GM12878 (cell line): ENCODE measurements at regions of chr9 and their contacts with region 1.

Region 1: GRCh38 chr9:97598461-97599288 is 34.5 kb downstream of the TSTD2 start:
- DNase-seq: peak; percentile 61
- ATAC-seq: peak; percentile 98
- H3K4me3 ChIP-seq: 0 out of 2 replicates have a peak overlapping the region, but pooled peaks have one; percentile 15
- H3K27ac ChIP-seq: no peak overlapping the region
- H3K4me1 ChIP-seq: peaks cover 7% of the 10 kb centered on the region; the same call in 1 of the 2 replicates
- H3K27me3 ChIP-seq: no peaks in the 10 kb centered on the region
- CTCF ChIP-seq: peak; percentile 77 to 94 (median 88)
- EP300 ChIP-seq: no peak
- POLR2A ChIP-seq: no peak
- RAD21 ChIP-seq: peak; percentile 86

Region 2: DNA sequence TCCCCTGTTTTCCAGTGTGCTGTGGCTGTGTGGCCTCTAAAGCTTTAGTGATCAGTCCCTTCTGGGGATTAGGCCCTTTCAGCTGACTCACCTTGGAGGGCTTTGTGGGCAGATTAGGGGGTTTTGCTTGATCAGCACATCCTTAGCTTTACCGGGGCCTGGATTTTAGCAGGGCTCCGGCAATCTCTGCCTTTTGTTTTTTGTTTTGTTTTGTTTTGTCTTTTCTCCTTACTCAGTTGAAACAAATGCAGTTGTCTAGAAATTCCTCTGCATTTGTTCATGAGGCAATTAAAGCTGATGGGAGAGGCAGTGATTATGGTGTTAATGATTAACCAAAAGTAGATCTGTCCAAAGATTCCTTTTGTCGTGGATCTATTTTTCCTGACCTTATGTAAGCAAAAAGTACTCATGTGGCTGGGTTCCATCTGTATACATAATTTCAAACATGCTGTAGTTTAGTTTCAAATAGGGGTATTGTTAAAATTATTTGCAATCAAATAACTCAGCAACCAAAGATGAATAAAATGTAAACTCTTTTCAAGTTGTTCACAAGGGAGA is 192.0 kb before region 1 on chr9:
- CTCF ChIA-PET with region 1: interaction called, 19 read pairs
- POLR2A ChIA-PET with region 1: no interaction called
- RAD21 ChIA-PET with region 1: no interaction called
- SMC1A ChIA-PET with region 1: interaction called, 9 read pairs
- in situ Hi-C with region 1: no loop called
- intact Hi-C with region 1: no loop called
- DNase-seq: no peak
- ATAC-seq: peak; percentile 60
- H3K4me3 ChIP-seq: no peak overlapping the region
- H3K27ac ChIP-seq: no peak overlapping the region
- H3K4me1 ChIP-seq: no peaks in the 10 kb centered on the region
- H3K27me3 ChIP-seq: no peaks in the 10 kb centered on the region; a peak in 1 of 4 replicates
- CTCF ChIP-seq: no peak
- EP300 ChIP-seq: no peak
- POLR2A ChIP-seq: no peak
- RAD21 ChIP-seq: no peak

Region 3: GRCh38 chr9:97468658-97469448 is 129.8 kb before region 1 on chr9:
- CTCF ChIA-PET with region 1: interaction called, 573 read pairs
- POLR2A ChIA-PET with region 1: interaction called, 11 read pairs
- RAD21 ChIA-PET with region 1: interaction called, 306 read pairs
- SMC1A ChIA-PET with region 1: interaction called, 377 read pairs
- in situ Hi-C with region 1: loop called (anchors 5 kb)
- intact Hi-C with region 1: loop called (anchors 1 kb)
- DNase-seq: peak; percentile 59
- ATAC-seq: peak; percentile 99
- H3K4me3 ChIP-seq: no peak overlapping the region; the same call in 1 of the 2 replicates
- H3K27ac ChIP-seq: peak overlapping the region; percentile 74
- H3K4me1 ChIP-seq: peaks cover 18% of the 10 kb centered on the region
- H3K27me3 ChIP-seq: no peaks in the 10 kb centered on the region
- CTCF ChIP-seq: peak; percentile 83 to 94 (median 92)
- EP300 ChIP-seq: no peak
- POLR2A ChIP-seq: no peak
- RAD21 ChIP-seq: peak; percentile 97

Region 4: DNA sequence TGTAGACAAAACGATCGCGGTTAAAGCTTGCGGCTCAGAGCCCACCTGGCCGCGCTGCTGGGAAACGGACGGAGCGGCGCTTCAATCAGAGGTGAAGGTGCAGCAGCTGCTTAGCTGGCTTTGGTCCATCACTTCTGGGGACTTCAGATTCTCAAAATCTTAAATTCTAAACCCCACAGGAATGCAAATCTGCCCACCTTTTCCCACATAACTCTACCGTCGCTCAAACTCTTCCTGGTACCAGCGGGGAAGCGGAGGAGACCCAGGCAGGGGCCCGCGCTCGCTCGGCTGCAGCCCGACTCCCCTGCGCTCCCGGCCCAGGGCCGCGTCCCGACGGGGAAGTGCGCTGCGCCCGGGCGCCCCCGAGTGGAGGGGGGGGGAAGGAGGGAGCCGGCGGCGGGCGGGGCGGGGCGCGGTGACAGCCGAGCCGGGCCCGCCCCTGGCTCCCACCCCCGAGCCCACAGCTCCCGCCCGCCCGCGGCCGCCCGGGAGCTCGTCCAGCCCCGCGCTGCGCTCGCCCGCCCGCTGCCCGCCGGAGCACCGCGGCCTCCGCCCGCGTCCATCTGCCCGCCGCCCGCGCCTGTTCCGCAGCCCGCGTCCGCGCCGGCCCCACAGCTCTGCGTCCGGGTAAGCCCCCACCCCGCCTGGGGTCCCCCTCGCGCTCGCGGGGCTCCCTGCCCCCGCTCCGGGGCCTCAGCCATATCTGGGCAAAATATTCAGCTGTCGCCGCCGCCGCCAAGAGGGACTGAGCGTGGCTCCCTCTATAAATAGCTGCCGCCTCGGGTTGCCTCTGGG is 97.3 kb before region 1 on chr9 and contains the start of gene TMOD1:
- CTCF ChIA-PET with region 1: interaction called, 135 read pairs
- POLR2A ChIA-PET with region 1: interaction called, 13 read pairs
- RAD21 ChIA-PET with region 1: interaction called, 106 read pairs
- SMC1A ChIA-PET with region 1: interaction called, 89 read pairs
- in situ Hi-C with region 1: no loop called
- intact Hi-C with region 1: loop called (anchors 10 kb)
- DNase-seq: no peak
- ATAC-seq: peak; percentile 73
- H3K4me3 ChIP-seq: peak within 1 kb of the TSS; percentile 86
- H3K27ac ChIP-seq: peak within 1 kb of the TSS; percentile 70
- H3K4me1 ChIP-seq: peaks cover 28% of the 10 kb centered on the region
- H3K27me3 ChIP-seq: no peaks in the 10 kb centered on the region
- CTCF ChIP-seq: peak; percentile 17 to 37 (median 27); a peak in 3 of 6 replicates
- EP300 ChIP-seq: no peak
- POLR2A ChIP-seq: peak; percentile 45; the same call in 1 of the 2 replicates
- RAD21 ChIP-seq: peak; percentile 39; the same call in 1 of the 2 replicates
- polyA plus RNA-seq, gene TMOD1: 11.1 to 16.9 TPM

Region 5: GRCh38 chr9:97559111-97559514 is 39.6 kb before region 1 on chr9:
- CTCF ChIA-PET with region 1: interaction called, 38 read pairs
- POLR2A ChIA-PET with region 1: no interaction called
- RAD21 ChIA-PET with region 1: interaction called, 19 read pairs
- SMC1A ChIA-PET with region 1: interaction called, 15 read pairs
- in situ Hi-C with region 1: no loop called
- intact Hi-C with region 1: no loop called
- DNase-seq: peak; percentile 85
- ATAC-seq: peak; percentile 90
- H3K4me3 ChIP-seq: peak overlapping the region; percentile 48; the same call in 1 of the 2 replicates
- H3K27ac ChIP-seq: peak overlapping the region; percentile 91
- H3K4me1 ChIP-seq: peaks cover 35% of the 10 kb centered on the region
- H3K27me3 ChIP-seq: no peaks in the 10 kb centered on the region
- CTCF ChIP-seq: no peak
- EP300 ChIP-seq: peak in 1 of 2 experiments; percentile 37; a peak in 1 of 4 replicates
- POLR2A ChIP-seq: 0 out of 2 replicates have a peak, but pooled peaks have one; percentile 38
- RAD21 ChIP-seq: no peak

Region 6: GRCh38 chr9:97623946-97624345 is 25.3 kb after region 1 on chr9:
- CTCF ChIA-PET with region 1: interaction called, 215 read pairs
- POLR2A ChIA-PET with region 1: no interaction called
- RAD21 ChIA-PET with region 1: no interaction called
- SMC1A ChIA-PET with region 1: interaction called, 49 read pairs
- in situ Hi-C with region 1: no loop called
- intact Hi-C with region 1: no loop called
- DNase-seq: no peak
- ATAC-seq: no peak
- H3K4me3 ChIP-seq: no peak overlapping the region
- H3K27ac ChIP-seq: no peak overlapping the region
- H3K4me1 ChIP-seq: no peaks in the 10 kb centered on the region; the same call in 1 of the 2 replicates
- H3K27me3 ChIP-seq: no peaks in the 10 kb centered on the region
- CTCF ChIP-seq: no peak
- EP300 ChIP-seq: no peak
- POLR2A ChIP-seq: no peak
- RAD21 ChIP-seq: no peak

Region 7: GRCh38 chr9:97943308-97943855 is 344.7 kb after region 1 on chr9:
- CTCF ChIA-PET with region 1: no interaction called
- POLR2A ChIA-PET with region 1: no interaction called
- RAD21 ChIA-PET with region 1: no interaction called
- SMC1A ChIA-PET with region 1: no interaction called
- in situ Hi-C with region 1: no loop called
- intact Hi-C with region 1: no loop called
- DNase-seq: no peak
- ATAC-seq: no peak
- H3K4me3 ChIP-seq: no peak overlapping the region
- H3K27ac ChIP-seq: no peak overlapping the region
- H3K4me1 ChIP-seq: no peaks in the 10 kb centered on the region
- H3K27me3 ChIP-seq: no peaks in the 10 kb centered on the region
- CTCF ChIP-seq: no peak
- EP300 ChIP-seq: no peak
- POLR2A ChIP-seq: no peak
- RAD21 ChIP-seq: no peak